Activated naive CD4-positive, alpha-beta T cell treated with anti-CD3 and anti-CD28 coated beads for 36 hours (primary cell): ENCODE measurements at regions of chr19 and their contacts with region 1.

Region 1: GRCh38 chr19:21141787-21142464 is at the start of gene ZNF431:
- DNase-seq: peak; percentile 95
- H3K4me3 Mint-ChIP-seq: peak within 1 kb of the TSS; percentile 99
- H3K27ac Mint-ChIP-seq: peak within 1 kb of the TSS; percentile 94
- H3K4me1 Mint-ChIP-seq: peaks cover 43% of the 10 kb centered on the region
- H3K27me3 Mint-ChIP-seq: no peaks in the 10 kb centered on the region
- total RNA-seq, gene ZNF431: 13.2 to 16.4 TPM

Region 2: GRCh38 chr19:20051841-20052768 is 1089.8 kb before region 1 on chr19:
- CTCF ChIA-PET with region 1: no interaction called
- intact Hi-C with region 1: loop called (anchors 5 kb)
- DNase-seq: peak; percentile 87
- H3K4me3 Mint-ChIP-seq: peak overlapping the region; percentile 95
- H3K27ac Mint-ChIP-seq: peak overlapping the region; percentile 86
- H3K4me1 Mint-ChIP-seq: peaks cover 6% of the 10 kb centered on the region
- H3K27me3 Mint-ChIP-seq: no peaks in the 10 kb centered on the region

Region 3: GRCh38 chr19:20423381-20424197 is 718.3 kb before region 1 on chr19:
- CTCF ChIA-PET with region 1: no interaction called
- intact Hi-C with region 1: loop called (anchors 5 kb)
- DNase-seq: peak; percentile 59
- H3K4me3 Mint-ChIP-seq: peak overlapping the region; percentile 94
- H3K27ac Mint-ChIP-seq: peak overlapping the region; percentile 98
- H3K4me1 Mint-ChIP-seq: peaks cover 10% of the 10 kb centered on the region
- H3K27me3 Mint-ChIP-seq: no peaks in the 10 kb centered on the region

Region 4: GRCh38 chr19:20999731-21000352 is 142.1 kb before region 1 on chr19:
- CTCF ChIA-PET with region 1: no interaction called
- intact Hi-C with region 1: loop called (anchors 2 kb)
- DNase-seq: peak; percentile 96
- H3K4me3 Mint-ChIP-seq: peak overlapping the region; percentile 97
- H3K27ac Mint-ChIP-seq: peak overlapping the region; percentile 87
- H3K4me1 Mint-ChIP-seq: peaks cover 3% of the 10 kb centered on the region
- H3K27me3 Mint-ChIP-seq: no peaks in the 10 kb centered on the region

Region 5: DNA sequence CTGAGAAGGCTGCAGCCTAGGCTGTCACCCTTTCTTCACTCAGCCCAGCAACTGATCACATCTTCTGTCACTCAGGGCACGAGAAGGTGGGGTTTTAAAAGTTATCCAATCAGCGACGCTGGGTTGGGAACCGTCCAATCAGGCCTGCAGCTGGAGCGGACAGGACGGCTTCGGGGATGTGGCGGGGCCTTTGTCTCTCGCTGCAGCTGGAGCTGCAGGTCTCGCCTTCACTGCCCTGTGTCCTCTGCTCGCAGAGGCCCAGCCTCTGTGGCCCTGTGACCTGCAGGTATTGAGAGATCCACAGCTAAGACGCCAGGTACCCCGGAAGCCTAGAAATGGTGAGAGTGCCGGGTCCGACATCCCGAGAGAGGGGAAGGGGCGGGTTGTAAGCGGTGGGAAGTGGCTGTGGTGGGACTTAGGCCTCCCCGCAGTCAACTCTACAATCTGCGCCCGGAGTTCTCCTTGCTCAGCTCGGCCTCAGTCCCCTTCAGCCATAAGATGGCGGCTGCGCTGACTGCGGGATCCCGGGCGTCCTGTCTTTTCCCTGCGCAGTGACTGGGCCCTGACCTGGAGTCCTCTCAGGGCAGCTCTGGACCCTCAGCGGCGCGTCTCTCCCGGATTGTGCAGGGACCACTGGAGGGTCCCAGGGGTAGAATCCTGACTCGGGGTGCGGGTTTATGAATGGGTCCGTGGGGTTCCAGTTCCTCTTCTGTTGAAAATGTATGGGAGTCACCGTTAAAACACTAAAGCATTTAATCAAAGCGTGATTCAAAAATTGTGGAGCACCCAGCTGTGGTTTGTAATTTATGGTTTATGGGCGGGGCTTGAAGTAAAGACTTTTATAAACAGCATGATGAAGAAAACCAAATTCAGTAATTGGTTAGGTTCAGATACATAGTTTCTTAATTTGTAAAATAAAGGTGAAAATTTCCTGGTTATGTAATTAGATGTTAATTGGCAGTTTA is 59.6 kb before region 1 on chr19 and contains the start of gene ZNF714:
- CTCF ChIA-PET with region 1: no interaction called
- intact Hi-C with region 1: loop called (anchors 2 kb)
- DNase-seq: peak; percentile 93
- H3K4me3 Mint-ChIP-seq: peak within 1 kb of the TSS; percentile 98
- H3K27ac Mint-ChIP-seq: peak within 1 kb of the TSS; percentile 95
- H3K4me1 Mint-ChIP-seq: peaks cover 29% of the 10 kb centered on the region
- H3K27me3 Mint-ChIP-seq: no peaks in the 10 kb centered on the region
- total RNA-seq, gene ZNF714: 21.1 to 23.1 TPM

Region 6: DNA sequence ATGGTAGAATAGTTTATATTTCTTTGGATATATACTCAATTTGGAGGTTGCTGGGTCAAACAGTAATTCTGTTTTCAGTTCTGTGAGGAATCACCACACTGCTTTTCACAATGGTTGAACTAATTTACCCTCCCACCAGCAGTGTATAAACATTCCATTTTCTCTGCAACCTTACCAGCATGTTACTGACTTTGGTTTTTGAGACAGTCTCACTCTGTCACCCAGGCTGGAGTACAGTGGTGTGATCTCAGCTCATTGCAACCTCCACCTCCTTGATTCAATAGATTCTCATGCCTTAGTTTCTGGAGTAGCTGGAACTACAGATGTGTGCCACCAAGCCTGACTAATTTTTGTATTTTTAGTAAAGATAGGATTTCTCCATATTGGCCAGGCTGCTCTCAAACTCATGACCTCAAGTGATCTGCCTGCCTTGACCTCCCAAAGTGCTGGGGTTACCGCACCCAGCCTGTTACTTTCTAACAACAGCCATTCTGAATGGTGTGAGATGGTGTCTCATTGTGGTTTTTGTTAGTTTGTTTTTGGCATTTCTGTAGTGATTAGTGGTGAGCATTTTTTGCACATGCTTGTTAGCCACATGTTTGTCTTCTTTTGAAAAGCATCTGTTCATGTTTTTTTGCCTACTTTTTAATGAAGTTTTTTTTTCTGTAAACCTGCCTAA is 47.4 kb before region 1 on chr19:
- CTCF ChIA-PET with region 1: no interaction called
- intact Hi-C with region 1: no loop called
- DNase-seq: no peak
- H3K4me3 Mint-ChIP-seq: no peak overlapping the region
- H3K27ac Mint-ChIP-seq: no peak overlapping the region
- H3K4me1 Mint-ChIP-seq: no peaks in the 10 kb centered on the region
- H3K27me3 Mint-ChIP-seq: no peaks in the 10 kb centered on the region

Region 7: DNA sequence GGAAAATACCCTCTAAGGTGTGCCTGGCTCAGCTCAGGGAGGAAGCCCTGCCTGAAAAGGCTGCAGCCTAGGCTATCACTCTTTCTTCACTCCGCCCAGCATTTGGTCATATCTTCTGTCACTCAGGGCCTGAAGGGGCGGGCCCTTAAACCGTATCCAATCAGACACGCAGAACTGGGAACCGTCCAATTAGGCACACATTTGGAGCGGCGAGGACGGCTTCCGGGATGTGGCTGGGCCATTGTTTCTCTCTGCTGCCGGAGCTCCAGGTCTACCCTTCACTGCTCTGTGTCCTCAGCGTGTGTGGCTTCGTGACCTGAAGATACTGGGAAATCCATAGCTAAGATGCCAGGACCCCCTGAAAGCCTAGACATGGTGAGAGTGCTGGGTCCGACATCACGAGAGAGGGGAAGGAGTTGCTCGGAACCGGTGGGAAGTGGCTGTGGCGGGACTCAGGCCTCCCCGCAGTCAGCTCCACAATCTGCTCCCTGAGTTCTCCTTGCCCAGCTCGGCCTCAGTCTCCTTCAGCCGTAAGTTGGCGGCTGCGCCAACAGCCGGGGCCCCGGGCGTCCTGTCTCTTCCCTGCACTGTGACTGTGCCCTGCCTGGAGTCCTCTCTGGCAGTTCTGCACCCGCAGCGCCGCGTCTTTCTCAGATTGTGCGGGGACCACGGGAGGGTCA is 255.1 kb after region 1 on chr19 and contains the start of gene ZNF493:
- CTCF ChIA-PET with region 1: no interaction called
- intact Hi-C with region 1: loop called (anchors 5 kb)
- DNase-seq: peak; percentile 97
- H3K4me3 Mint-ChIP-seq: peak within 1 kb of the TSS; percentile 96
- H3K27ac Mint-ChIP-seq: peak within 1 kb of the TSS; percentile 92
- H3K4me1 Mint-ChIP-seq: peaks cover 21% of the 10 kb centered on the region
- H3K27me3 Mint-ChIP-seq: no peaks in the 10 kb centered on the region
- total RNA-seq, gene ZNF493: 10.3 to 10.9 TPM

Region 8: GRCh38 chr19:21568816-21569493 is 427.0 kb after region 1 on chr19:
- CTCF ChIA-PET with region 1: no interaction called
- intact Hi-C with region 1: loop called (anchors 5 kb)
- DNase-seq: peak; percentile 94
- H3K4me3 Mint-ChIP-seq: peak overlapping the region; percentile 99
- H3K27ac Mint-ChIP-seq: peak overlapping the region; percentile 99
- H3K4me1 Mint-ChIP-seq: peaks cover 30% of the 10 kb centered on the region
- H3K27me3 Mint-ChIP-seq: no peaks in the 10 kb centered on the region